ENCODE measurements at regions of chr7 and their contacts with region 1.

Region 1: GRCh38 chr7:85719981-85720963 is 533.4 kb upstream of the SEMA3D start:
- DNase-seq: no peak
- H3K4me3 Mint-ChIP-seq: no peak overlapping the region
- H3K27ac Mint-ChIP-seq: no peak overlapping the region
- H3K4me1 Mint-ChIP-seq: no peaks in the 10 kb centered on the region
- H3K27me3 Mint-ChIP-seq: no peaks in the 10 kb centered on the region

Region 2: GRCh38 chr7:85669225-85669624 is 51.0 kb before region 1 on chr7:
- CTCF ChIA-PET with region 1: no interaction called
- intact Hi-C with region 1: loop called (anchors 10 kb)
- DNase-seq: no peak
- H3K4me3 Mint-ChIP-seq: no peak overlapping the region
- H3K27ac Mint-ChIP-seq: no peak overlapping the region
- H3K4me1 Mint-ChIP-seq: no peaks in the 10 kb centered on the region
- H3K27me3 Mint-ChIP-seq: no peaks in the 10 kb centered on the region

Measured in activated naive CD4-positive, alpha-beta T cell treated with anti-CD3 and anti-CD28 coated beads for 36 hours (primary cell).